ENCODE measurements at regions of chr15 and their contacts with region 1.

Region 1: DNA sequence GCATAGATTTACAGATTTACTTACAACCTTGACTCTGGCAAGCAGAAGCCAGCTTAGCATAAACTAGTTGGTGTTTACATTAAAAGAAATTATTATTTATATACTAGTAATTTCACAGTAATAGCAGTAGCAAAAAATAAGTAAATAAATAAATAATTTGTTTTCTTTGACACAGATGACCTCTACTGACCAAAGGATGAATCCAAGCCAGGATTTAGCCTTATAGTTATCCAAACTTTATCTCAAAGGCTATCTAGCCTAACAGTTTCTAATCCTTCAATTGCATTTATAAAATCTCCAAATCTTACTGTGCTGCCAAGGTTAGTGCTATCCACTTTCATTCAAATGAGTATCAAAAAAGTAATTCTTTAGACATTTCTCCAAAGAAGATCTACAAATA is 64.3 kb downstream of the FRMD5 start:
- DNase-seq: no peak
- H3K4me3 ChIP-seq: no peak overlapping the region
- H3K27ac ChIP-seq: no peak overlapping the region
- H3K4me1 ChIP-seq: no peaks in the 10 kb centered on the region
- H3K27me3 ChIP-seq: no peaks in the 10 kb centered on the region
- CTCF ChIP-seq: peak in 1 of 2 donors; percentile 22

Region 2: GRCh38 chr15:44066316-44066740 is 64.5 kb before region 1 on chr15:
- CTCF ChIA-PET with region 1: interaction called, 4 read pairs
- dilution Hi-C with region 1: no loop called
- in situ Hi-C with region 1: no loop called
- intact Hi-C with region 1: loop called (anchors 2 kb)
- DNase-seq: peak; percentile 65
- H3K4me3 ChIP-seq: no peak overlapping the region
- H3K27ac ChIP-seq: peak overlapping the region; percentile 31
- H3K4me1 ChIP-seq: peaks cover 9% of the 10 kb centered on the region
- H3K27me3 ChIP-seq: no peaks in the 10 kb centered on the region
- CTCF ChIP-seq: peak; percentile 72 to 80